ENCODE measurements at regions of chr12 and their contacts with region 1.

Region 1: GRCh38 chr12:56206457-56207166 is 15.1 kb downstream of the RNF41 start:
- DNase-seq: peak; percentile 50
- H3K4me3 Mint-ChIP-seq: no peak overlapping the region
- H3K27ac Mint-ChIP-seq: no peak overlapping the region
- H3K4me1 Mint-ChIP-seq: no peaks in the 10 kb centered on the region
- H3K27me3 Mint-ChIP-seq: no peaks in the 10 kb centered on the region

Region 2: DNA sequence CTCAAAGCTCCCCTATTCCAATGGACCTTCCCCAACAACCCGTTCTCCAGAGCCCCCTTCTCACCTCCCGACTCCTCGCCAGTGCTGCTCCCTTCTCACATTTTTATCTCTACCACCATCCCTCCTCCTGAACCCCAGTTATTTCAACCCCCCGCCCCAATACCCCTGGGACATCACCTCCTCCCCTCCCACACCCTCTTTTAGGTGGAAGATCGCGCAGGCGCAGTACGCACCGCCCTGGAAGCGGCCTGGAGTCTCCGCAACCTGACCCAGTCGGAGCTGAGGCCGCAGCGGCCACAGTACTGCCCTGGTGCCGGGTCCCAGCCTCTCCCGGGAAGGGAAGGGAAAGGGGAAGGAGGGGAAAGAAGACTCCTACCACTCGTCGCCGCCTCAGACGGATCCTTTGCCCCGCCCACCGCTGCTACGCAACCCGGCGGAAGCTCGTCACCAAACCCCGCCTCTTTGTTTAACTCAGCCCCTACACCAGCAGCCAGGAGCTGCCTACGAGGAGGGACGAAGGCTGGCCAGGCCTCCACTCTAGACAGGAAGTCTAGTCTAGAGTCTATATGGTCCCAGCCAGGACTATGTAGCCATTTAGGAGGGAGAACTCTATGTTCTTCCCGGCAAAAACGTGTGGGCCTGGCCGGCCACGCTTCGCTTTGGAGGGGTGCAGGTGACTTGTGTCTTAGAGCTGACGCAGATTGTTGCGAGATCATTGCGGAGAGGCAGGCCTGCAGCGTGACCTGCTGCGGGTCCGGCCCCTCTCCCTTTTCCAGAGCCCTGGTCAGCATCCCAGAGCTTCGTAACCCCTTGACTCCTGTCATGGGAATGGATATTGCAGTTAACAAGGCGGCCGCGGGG is 15.1 kb after region 1 on chr12 and contains the start of gene RNF41:
- CTCF ChIA-PET with region 1: interaction called, 30 read pairs
- POLR2A ChIA-PET with region 1: interaction called, 4 read pairs
- DNase-seq: peak; percentile 95
- H3K4me3 Mint-ChIP-seq: peak within 1 kb of the TSS; percentile 90
- H3K27ac Mint-ChIP-seq: peak within 1 kb of the TSS; percentile 93
- H3K4me1 Mint-ChIP-seq: peaks cover 49% of the 10 kb centered on the region
- H3K27me3 Mint-ChIP-seq: no peaks in the 10 kb centered on the region
- total RNA-seq, gene RNF41: 30.1 to 31.6 TPM